CD4-positive, alpha-beta memory T cell (primary cell): ENCODE measurements at regions of chr1 and their contacts with region 1.

Region 1: GRCh38 chr1:47437447-47438164 is at the start of gene FOXD2:
- DNase-seq: peak; percentile 92 to 96 (median 93)
- H3K4me3 ChIP-seq: peak within 1 kb of the TSS; percentile 55 to 75
- H3K4me3 Mint-ChIP-seq: peak within 1 kb of the TSS; percentile 88 to 94 (median 92)
- H3K27ac ChIP-seq: peak within 1 kb of the TSS; percentile 46
- H3K27ac Mint-ChIP-seq: peak within 1 kb of the TSS; percentile 86 to 97 (median 91)
- H3K4me1 ChIP-seq: peaks cover 21% of the 10 kb centered on the region
- H3K4me1 Mint-ChIP-seq: peaks cover 11 to 34% (median 24%) of the 10 kb centered on the region in 4 donors
- H3K27me3 ChIP-seq: peaks cover 17% of the 10 kb centered on the region
- H3K27me3 Mint-ChIP-seq: peaks cover 4 to 5% of the 10 kb centered on the region in 2 donors
- total RNA-seq, gene FOXD2: 0.64 to 0.73 TPM

Region 2: GRCh38 chr1:47179017-47179987 is 258.3 kb before region 1 on chr1:
- CTCF ChIA-PET with region 1: interaction called, 12 read pairs
- POLR2A ChIA-PET with region 1: no interaction called
- intact Hi-C with region 1: no loop called
- DNase-seq: peak; percentile 45 to 60 (median 58)
- H3K4me3 ChIP-seq: peak overlapping the region; percentile 34 to 53
- H3K4me3 Mint-ChIP-seq: peak overlapping the region; percentile 76 to 88 (median 86)
- H3K27ac ChIP-seq: no peak overlapping the region
- H3K27ac Mint-ChIP-seq: peak overlapping the region in 3 of 7 donors; percentile 32 to 75 (median 66)
- H3K4me1 ChIP-seq: peaks cover 7% of the 10 kb centered on the region
- H3K4me1 Mint-ChIP-seq: peaks cover 9 to 17% (median 13%) of the 10 kb centered on the region in 4 donors
- H3K27me3 ChIP-seq: peaks cover 10% of the 10 kb centered on the region
- H3K27me3 Mint-ChIP-seq: peaks cover 15 to 40% of the 10 kb centered on the region in 2 donors

Region 3: DNA sequence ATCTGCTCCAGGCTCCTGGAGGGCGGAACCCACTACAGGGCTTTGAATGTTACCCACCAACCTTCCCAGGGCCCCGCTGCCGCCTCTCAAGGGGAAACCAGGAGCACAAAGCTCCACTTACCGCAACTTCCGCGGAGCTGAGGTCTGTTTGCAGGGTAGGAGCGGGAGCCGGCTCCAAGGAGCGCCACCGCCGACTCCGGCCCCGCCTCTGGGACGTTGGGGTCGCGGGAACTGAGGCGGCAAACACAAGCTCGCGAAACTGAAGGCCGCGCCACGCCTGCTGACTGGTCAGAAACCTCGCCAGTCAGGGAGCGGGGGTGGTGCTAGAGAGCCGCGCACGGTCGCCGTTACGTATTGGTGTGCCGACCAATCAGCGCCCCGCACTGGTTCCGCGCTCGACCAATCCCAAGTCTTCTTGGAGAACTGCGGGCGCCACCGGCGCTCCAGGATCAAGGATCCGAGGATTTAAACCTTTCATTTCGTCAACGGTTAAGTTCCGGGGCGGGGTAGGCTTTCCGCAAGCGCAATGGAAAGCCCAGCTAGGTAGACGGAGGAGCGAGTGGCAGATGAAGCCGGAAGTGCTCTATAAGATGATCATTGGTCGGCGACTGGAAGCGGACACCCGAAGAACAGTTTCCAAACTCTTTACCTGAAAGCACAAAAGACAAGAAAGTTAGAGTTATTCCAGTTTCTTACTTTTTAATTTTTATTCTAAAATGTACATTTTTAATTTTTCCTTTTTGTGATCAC is 123.5 kb before region 1 on chr1 and contains the start of gene STIL:
- CTCF ChIA-PET with region 1: interaction called, 5 read pairs
- POLR2A ChIA-PET with region 1: interaction called, 8 read pairs
- intact Hi-C with region 1: loop called (anchors 1 kb)
- DNase-seq: peak; percentile 95 to 98 (median 97)
- H3K4me3 ChIP-seq: peak within 1 kb of the TSS; percentile 49 to 91
- H3K4me3 Mint-ChIP-seq: peak within 1 kb of the TSS; percentile 89 to 100 (median 93)
- H3K27ac ChIP-seq: peak within 1 kb of the TSS; percentile 56
- H3K27ac Mint-ChIP-seq: peak within 1 kb of the TSS; percentile 93 to 99 (median 96)
- H3K4me1 ChIP-seq: peaks cover 5% of the 10 kb centered on the region
- H3K4me1 Mint-ChIP-seq: peaks cover 7 to 22% (median 12%) of the 10 kb centered on the region in 4 donors
- H3K27me3 ChIP-seq: no peaks in the 10 kb centered on the region
- H3K27me3 Mint-ChIP-seq: no peaks in the 10 kb centered on the region
- total RNA-seq, gene STIL: 1.6 to 2.6 TPM

Region 4: DNA sequence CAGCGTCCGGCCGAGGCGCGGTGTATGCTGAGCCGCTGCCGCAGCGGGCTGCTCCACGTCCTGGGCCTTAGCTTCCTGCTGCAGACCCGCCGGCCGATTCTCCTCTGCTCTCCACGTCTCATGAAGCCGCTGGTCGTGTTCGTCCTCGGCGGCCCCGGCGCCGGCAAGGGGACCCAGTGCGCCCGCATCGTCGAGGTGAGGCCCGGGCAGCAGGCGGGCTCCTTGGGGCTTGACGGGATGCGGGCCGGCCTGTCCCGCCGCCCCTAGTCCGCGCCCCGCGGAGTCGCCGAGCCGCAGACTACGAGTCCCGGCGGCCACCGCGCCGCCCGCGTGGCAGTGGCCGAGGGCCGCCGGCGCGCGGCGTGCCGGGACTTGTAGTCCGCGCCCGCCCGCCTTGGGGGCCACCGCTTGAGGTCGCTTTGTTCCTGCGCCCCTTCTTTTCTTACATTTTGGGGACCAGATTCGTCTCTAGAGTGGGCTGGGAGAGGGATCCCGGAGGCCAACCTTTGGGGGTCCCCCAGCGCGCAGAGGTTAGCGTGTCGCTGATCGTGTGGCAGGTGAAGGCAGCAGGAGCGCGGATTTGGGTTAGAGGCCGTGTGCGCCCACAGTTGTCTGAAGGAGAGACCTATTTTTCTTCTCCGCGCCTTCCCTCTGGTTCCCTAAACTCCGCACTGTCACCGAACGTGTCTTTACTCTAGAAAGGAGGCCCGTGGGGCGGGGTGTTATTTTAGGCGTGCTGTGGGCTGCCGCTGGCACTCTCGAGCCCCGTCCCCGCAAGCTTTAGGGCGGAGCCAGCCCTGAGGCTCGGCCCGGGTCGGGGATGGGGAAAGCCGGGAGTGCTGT is 103.5 kb before region 1 on chr1:
- CTCF ChIA-PET with region 1: interaction called, 12 read pairs
- POLR2A ChIA-PET with region 1: interaction called, 18 read pairs
- intact Hi-C with region 1: loop called (anchors 1 kb)
- DNase-seq: peak; percentile 74 to 85 (median 79)
- H3K4me3 ChIP-seq: peak overlapping the region; percentile 86 to 99
- H3K4me3 Mint-ChIP-seq: peak overlapping the region; percentile 91 to 94 (median 93)
- H3K27ac ChIP-seq: peak overlapping the region; percentile 88
- H3K27ac Mint-ChIP-seq: peak overlapping the region in 6 of 7 donors; percentile 90 to 96 (median 92)
- H3K4me1 ChIP-seq: peaks cover 40% of the 10 kb centered on the region
- H3K4me1 Mint-ChIP-seq: peaks cover 10 to 28% (median 15%) of the 10 kb centered on the region in 4 donors
- H3K27me3 ChIP-seq: no peaks in the 10 kb centered on the region
- H3K27me3 Mint-ChIP-seq: no peaks in the 10 kb centered on the region

Region 5: DNA sequence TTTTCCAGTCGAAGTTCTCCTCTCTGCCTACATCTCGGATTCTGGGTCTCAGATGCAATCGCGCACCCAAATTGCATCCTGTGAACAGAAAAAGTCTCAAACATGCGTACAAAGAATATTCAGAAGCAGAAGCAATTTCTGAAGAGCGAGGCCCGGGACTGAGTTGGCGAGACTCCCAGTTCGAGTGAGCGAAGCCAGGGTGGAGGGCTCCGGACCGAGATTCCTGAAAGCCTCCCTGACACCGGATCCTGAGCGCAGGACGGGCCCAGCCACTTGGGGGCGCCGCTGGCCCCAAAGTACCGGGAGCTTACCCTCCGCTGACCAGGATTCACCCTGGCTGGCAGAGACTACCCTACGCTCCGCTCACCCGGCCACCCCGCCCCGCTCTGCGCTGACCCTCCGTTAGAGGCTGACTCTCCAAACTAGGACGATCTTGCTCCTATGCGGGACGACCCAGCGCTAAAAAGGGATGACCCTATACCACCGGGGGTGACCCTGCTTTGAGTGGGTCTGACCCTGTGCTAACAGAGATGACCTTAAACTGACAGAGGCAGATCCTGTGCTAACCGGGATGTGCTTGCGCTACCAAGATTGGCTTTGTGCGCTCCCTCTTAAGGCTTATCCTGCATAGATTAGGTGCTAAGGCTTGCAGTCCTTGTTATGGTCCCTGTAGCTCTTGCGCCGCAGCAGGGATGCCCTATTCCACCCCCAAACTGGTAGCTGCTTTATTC is 12.4 kb after region 1 on chr1:
- CTCF ChIA-PET with region 1: interaction called, 34 read pairs
- POLR2A ChIA-PET with region 1: interaction called, 5 read pairs
- intact Hi-C with region 1: no loop called
- DNase-seq: no peak
- H3K4me3 ChIP-seq: no peak overlapping the region
- H3K4me3 Mint-ChIP-seq: no peak overlapping the region
- H3K27ac ChIP-seq: no peak overlapping the region
- H3K27ac Mint-ChIP-seq: no peak overlapping the region
- H3K4me1 ChIP-seq: peaks cover 15% of the 10 kb centered on the region
- H3K4me1 Mint-ChIP-seq: peaks cover 6 to 10% (median 9%) of the 10 kb centered on the region in 4 donors
- H3K27me3 ChIP-seq: peaks cover 62% of the 10 kb centered on the region
- H3K27me3 Mint-ChIP-seq: peaks cover 45 to 53% of the 10 kb centered on the region in 2 donors

Region 6: DNA sequence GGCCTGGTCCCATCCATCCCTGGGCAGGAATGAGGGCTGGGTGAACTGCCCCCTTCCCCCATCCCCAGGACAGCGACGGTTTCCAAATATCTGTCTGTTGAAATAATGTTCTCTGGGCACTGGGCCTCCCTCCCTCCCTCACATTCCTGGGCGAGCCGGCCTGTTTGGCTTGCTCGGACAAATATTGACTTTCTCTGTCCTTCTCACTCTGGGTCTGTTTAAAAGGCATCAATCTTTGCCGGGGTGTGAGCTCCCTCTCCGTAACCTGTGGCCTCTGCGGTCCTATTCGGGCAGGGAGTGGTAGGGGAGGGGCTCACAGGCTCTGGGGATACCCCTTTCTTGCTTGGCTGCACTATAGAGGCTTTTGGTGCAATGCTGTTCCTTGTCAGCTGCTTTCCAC is 40.5 kb after region 1 on chr1:
- CTCF ChIA-PET with region 1: no interaction called
- POLR2A ChIA-PET with region 1: no interaction called
- intact Hi-C with region 1: no loop called
- DNase-seq: no peak
- H3K4me3 ChIP-seq: no peak overlapping the region
- H3K4me3 Mint-ChIP-seq: no peak overlapping the region
- H3K27ac ChIP-seq: no peak overlapping the region
- H3K27ac Mint-ChIP-seq: no peak overlapping the region
- H3K4me1 ChIP-seq: no peaks in the 10 kb centered on the region
- H3K4me1 Mint-ChIP-seq: no peaks in the 10 kb centered on the region
- H3K27me3 ChIP-seq: no peaks in the 10 kb centered on the region
- H3K27me3 Mint-ChIP-seq: peaks cover 14 to 19% of the 10 kb centered on the region in 2 donors

Region 7: GRCh38 chr1:47501069-47501468 is 63.5 kb after region 1 on chr1:
- CTCF ChIA-PET with region 1: no interaction called
- POLR2A ChIA-PET with region 1: no interaction called
- intact Hi-C with region 1: no loop called
- DNase-seq: no peak
- H3K4me3 ChIP-seq: no peak overlapping the region
- H3K4me3 Mint-ChIP-seq: no peak overlapping the region
- H3K27ac ChIP-seq: no peak overlapping the region
- H3K27ac Mint-ChIP-seq: no peak overlapping the region
- H3K4me1 ChIP-seq: no peaks in the 10 kb centered on the region
- H3K4me1 Mint-ChIP-seq: no peaks in the 10 kb centered on the region
- H3K27me3 ChIP-seq: peaks cover 2% of the 10 kb centered on the region
- H3K27me3 Mint-ChIP-seq: peaks cover 25 to 30% of the 10 kb centered on the region in 2 donors

Region 8: DNA sequence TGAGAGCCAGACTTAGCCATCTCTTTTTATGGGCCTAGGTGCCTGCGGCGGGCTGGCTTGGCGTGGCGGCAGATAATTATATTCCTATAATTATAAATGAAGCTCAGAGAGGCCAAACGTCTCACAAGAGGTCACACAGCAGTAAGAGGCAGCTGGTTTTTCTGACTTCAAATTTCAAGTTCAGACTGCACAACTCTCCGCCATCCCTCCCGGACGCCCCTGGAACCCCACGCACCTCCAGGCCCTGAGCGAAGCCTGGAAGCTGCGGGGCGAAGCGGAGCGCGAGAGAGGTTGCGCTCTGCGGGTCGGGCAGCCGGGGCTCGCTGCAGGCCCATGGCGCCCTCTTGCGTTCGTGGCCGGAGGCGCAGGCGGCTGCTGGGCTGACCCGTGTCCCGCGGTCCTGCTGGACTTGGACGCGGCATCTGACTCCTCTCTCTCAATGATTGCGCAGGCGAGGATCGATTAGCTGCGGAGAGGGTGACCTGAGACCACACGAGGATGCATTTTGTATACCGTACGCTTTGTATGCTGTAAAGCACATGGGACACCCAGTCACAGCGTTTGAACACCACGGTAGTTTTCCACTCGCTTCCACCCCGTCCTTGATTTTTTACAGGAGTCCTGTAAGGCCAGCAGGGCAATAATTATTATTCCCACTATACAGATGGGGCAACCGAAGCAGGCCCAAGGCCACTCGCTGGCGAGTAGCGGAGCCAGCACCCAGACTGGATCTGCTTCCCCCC is 272.9 kb after region 1 on chr1:
- CTCF ChIA-PET with region 1: interaction called, 138 read pairs
- POLR2A ChIA-PET with region 1: interaction called, 4 read pairs
- intact Hi-C with region 1: loop called (anchors 1 kb)
- DNase-seq: peak in 4 of 5 donors; percentile 54 to 67 (median 54)
- H3K4me3 ChIP-seq: no peak overlapping the region
- H3K4me3 Mint-ChIP-seq: peak overlapping the region in 7 of 8 donors; percentile 35 to 65 (median 57)
- H3K27ac ChIP-seq: no peak overlapping the region
- H3K27ac Mint-ChIP-seq: peak overlapping the region in 1 of 7 donors; percentile 18
- H3K4me1 ChIP-seq: peaks cover 20% of the 10 kb centered on the region
- H3K4me1 Mint-ChIP-seq: peaks cover 0 to 17% (median 8%) of the 10 kb centered on the region in 4 donors
- H3K27me3 ChIP-seq: peaks cover 31% of the 10 kb centered on the region
- H3K27me3 Mint-ChIP-seq: peaks cover 40 to 47% of the 10 kb centered on the region in 2 donors

Region 9: DNA sequence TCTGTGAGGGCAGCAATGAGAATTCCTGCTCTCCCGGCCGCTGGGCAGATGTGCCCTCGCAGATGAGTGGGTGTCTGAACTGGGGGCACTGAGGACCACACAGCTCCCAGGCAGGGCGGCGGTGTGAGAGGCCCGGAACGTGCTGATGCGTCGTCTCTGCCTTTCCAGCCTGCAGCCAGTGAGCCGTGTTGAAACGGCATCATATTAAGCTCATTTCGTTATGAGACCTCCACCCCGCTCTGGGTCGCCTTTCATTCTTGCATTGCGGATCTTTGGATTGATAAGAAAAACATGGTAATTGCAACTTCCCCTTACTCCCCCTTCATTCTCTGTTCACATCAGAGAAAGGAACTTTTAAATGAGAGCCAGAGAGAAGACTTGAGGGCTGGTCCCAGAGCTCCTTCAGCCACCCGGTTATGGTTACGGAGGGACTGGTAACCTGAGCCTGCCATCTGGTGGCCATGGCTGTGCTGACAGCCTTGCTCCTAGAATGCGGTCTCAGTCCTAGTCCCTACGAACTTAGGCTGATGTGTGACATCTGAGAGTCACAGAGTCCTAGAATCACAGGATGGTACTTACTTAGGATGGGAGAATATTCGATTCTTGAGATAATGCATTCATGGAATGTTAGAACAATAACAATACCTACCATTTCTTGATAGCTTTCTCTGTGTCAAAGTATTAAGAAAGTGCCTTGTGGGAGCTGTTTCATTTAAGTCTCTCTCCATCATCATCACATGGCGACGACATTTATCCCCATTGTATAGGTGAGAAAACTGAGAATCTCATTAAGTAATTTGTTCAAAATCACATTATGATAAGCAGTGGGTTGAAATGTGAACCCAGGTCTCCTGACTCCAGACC is 288.6 kb after region 1 on chr1:
- CTCF ChIA-PET with region 1: interaction called, 138 read pairs
- POLR2A ChIA-PET with region 1: interaction called, 3 read pairs
- intact Hi-C with region 1: loop called (anchors 1 kb)
- DNase-seq: peak; percentile 38 to 56 (median 48)
- H3K4me3 ChIP-seq: no peak overlapping the region
- H3K4me3 Mint-ChIP-seq: peak overlapping the region; percentile 53 to 86 (median 76)
- H3K27ac ChIP-seq: no peak overlapping the region
- H3K27ac Mint-ChIP-seq: no peak overlapping the region
- H3K4me1 ChIP-seq: peaks cover 4% of the 10 kb centered on the region
- H3K4me1 Mint-ChIP-seq: peaks cover 3 to 12% (median 9%) of the 10 kb centered on the region in 4 donors
- H3K27me3 ChIP-seq: peaks cover 12% of the 10 kb centered on the region
- H3K27me3 Mint-ChIP-seq: peaks cover 30% of the 10 kb centered on the region in 2 donors